ENCODE measurements at regions of chr20 and their contacts with region 1.

Region 1: DNA sequence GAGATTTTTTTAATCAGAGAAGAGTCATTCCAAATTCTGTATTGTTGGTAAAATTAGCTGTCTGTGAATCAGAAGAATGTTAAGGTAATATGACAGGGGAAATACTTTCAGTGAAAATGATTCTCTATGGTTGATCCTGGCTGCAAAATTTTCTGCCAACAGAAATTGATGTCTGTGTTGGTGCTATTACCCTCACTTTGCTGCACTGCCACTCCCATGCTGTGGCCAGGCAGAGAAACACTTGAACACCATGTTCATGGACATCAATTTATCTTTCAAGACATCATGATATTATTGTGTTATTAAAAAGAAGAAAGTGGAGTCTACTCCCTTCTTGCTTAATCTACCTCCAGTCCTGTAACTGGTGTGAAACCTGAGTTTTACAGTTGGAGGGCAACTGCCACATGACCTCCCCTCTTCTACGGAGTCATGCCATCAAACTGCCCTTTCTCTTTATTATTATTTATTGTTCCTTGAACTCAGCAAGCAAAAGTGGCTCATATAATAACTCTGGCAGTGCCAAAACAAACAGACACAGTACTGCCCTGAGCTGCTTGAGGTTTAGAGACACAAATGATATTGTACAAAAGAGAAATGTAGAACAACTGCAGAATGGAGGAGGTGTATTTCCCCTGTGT is 288.0 kb upstream of the JAG1 start:
- DNase-seq: no peak
- ATAC-seq: no peak
- H3K4me3 ChIP-seq: no peak overlapping the region
- H3K27ac ChIP-seq: no peak overlapping the region
- H3K4me1 ChIP-seq: peaks cover 0 to 37% (median 12%) of the 10 kb centered on the region in 12 donors
- H3K27me3 ChIP-seq: no peaks in the 10 kb centered on the region
- CTCF ChIP-seq: no peak
- POLR2A ChIP-seq: no peak

Region 2: DNA sequence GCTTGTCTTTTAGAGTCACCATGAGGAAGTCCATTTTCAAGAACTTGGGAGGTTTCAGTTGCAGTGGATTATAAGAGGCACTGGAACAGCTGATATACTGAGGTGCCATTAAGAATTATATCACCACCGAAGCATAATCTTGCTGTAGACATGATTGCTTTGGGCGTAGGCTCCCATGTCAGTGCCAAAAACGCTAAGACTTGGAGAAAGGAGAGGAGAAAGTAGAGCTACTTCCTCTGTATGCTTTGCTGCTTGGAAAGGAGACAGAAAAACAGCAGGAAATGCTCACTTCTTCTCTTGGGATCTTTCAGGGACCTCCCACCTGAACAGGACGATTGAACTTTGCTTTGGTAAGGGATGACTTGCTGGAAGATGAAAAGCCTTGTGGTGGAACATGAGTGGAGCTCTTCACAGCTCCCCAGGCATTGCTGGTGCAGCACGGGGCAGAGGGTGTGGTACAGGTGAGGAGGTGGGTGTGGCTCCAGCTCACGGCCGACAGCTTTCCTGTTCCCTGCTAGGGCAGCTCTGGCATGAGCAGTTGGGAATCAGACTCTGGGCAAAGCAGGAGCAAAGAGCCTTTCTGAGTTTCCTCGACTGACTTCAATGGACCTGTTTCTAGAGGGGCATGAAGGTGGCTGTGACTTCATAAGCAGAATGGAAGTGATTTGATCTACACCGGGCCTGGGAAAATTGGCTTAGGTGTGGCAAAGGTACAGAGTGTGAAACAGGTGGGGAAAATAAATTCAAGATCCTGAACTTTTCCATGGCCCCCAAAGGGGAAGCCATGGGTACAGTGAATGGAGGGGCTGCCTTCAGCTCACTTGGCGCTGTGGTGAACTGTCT is 97.5 kb before region 1 on chr20:
- intact Hi-C with region 1: loop called in 1 of 10 experiments (anchors 5 kb)
- DNase-seq: peak in 4 of 5 donors; percentile 25 to 47 (median 40)
- ATAC-seq: peak; percentile 67 to 90 (median 84)
- H3K4me3 ChIP-seq: peak overlapping the region in 2 of 12 donors; percentile 5 to 12
- H3K27ac ChIP-seq: peak overlapping the region in 11 of 12 donors; percentile 53 to 78 (median 65)
- H3K4me1 ChIP-seq: peaks cover 0 to 24% (median 21%) of the 10 kb centered on the region in 12 donors
- H3K27me3 ChIP-seq: no peaks in the 10 kb centered on the region
- CTCF ChIP-seq: no peak
- POLR2A ChIP-seq: no peak

Region 3: GRCh38 chr20:11012975-11013374 is 51.2 kb after region 1 on chr20:
- intact Hi-C with region 1: loop called in 1 of 10 experiments (anchors 5 kb)
- DNase-seq: no peak
- ATAC-seq: peak; percentile 34 to 87 (median 74)
- H3K4me3 ChIP-seq: no peak overlapping the region
- H3K27ac ChIP-seq: peak overlapping the region in 9 of 12 donors; percentile 16 to 73 (median 36)
- H3K4me1 ChIP-seq: peaks cover 0 to 26% (median 2%) of the 10 kb centered on the region in 12 donors
- H3K27me3 ChIP-seq: no peaks in the 10 kb centered on the region
- CTCF ChIP-seq: no peak
- POLR2A ChIP-seq: no peak

Measured in heart left ventricle (tissue), 16 donors.